ENCODE measurements at regions of chr17 and their contacts with region 1.

Region 1: GRCh38 chr17:48351831-48352332 is 78.1 kb downstream of the SKAP1 start:
- DNase-seq: peak; percentile 75
- ATAC-seq: no peak
- H3K4me3 ChIP-seq: no peak overlapping the region
- H3K27ac ChIP-seq: no peak overlapping the region
- H3K4me1 ChIP-seq: no peaks in the 10 kb centered on the region
- H3K27me3 ChIP-seq: no peaks in the 10 kb centered on the region
- CTCF ChIP-seq: peak; percentile 91

Region 2: DNA sequence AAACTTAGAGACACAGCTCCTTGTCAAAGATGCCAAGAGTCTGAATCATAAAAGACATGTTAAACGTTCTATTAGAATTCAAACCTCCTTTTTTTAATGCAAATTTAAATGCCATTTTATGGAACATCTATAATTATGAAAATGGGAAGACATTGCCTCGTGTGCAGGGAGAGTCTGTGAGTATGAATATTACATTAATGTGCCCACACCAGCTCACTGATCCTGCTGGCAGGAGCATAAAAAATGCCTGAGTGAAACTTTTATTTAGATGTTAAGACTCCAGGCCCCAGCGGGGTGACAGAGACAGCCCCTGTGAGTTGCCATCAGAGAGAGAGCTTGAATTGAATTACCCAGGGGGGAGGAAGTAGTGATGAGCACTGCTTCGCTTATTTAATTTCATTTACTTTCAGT is 159.6 kb before region 1 on chr17:
- CTCF ChIA-PET with region 1: interaction called, 11 read pairs
- POLR2A ChIA-PET with region 1: no interaction called
- intact Hi-C with region 1: no loop called
- DNase-seq: peak; percentile 34
- ATAC-seq: no peak
- H3K4me3 ChIP-seq: no peak overlapping the region
- H3K27ac ChIP-seq: no peak overlapping the region
- H3K4me1 ChIP-seq: peaks cover 33% of the 10 kb centered on the region
- H3K27me3 ChIP-seq: no peaks in the 10 kb centered on the region
- CTCF ChIP-seq: no peak

Region 3: GRCh38 chr17:48472411-48473281 is 120.8 kb after region 1 on chr17:
- CTCF ChIA-PET with region 1: interaction called, 19 read pairs
- POLR2A ChIA-PET with region 1: no interaction called
- intact Hi-C with region 1: loop called (anchors 5 kb)
- DNase-seq: peak; percentile 96
- ATAC-seq: peak; percentile 90
- H3K4me3 ChIP-seq: peak overlapping the region; percentile 26; the same call in 1 of the 2 replicates
- H3K27ac ChIP-seq: peak overlapping the region; percentile 93
- H3K4me1 ChIP-seq: peaks cover 24% of the 10 kb centered on the region
- H3K27me3 ChIP-seq: no peaks in the 10 kb centered on the region
- CTCF ChIP-seq: no peak

Region 4: GRCh38 chr17:48505787-48506645 is 154.1 kb after region 1 on chr17:
- CTCF ChIA-PET with region 1: interaction called, 4 read pairs
- POLR2A ChIA-PET with region 1: interaction called, 20 read pairs
- intact Hi-C with region 1: no loop called
- DNase-seq: peak; percentile 99
- ATAC-seq: peak; percentile 97
- H3K4me3 ChIP-seq: no peak overlapping the region
- H3K27ac ChIP-seq: peak overlapping the region; percentile 88
- H3K4me1 ChIP-seq: peaks cover 41% of the 10 kb centered on the region
- H3K27me3 ChIP-seq: no peaks in the 10 kb centered on the region
- CTCF ChIP-seq: peak; percentile 51

Region 5: GRCh38 chr17:48625495-48626244 is 273.8 kb after region 1 on chr17:
- CTCF ChIA-PET with region 1: interaction called, 13 read pairs
- POLR2A ChIA-PET with region 1: no interaction called
- intact Hi-C with region 1: no loop called
- DNase-seq: peak; percentile 77
- ATAC-seq: peak; percentile 84
- H3K4me3 ChIP-seq: peak overlapping the region; percentile 70
- H3K27ac ChIP-seq: no peak overlapping the region
- H3K4me1 ChIP-seq: peaks cover 12% of the 10 kb centered on the region
- H3K27me3 ChIP-seq: peaks cover 59% of the 10 kb centered on the region
- CTCF ChIP-seq: no peak